GM18951 (cell line): ENCODE measurements at regions of chr3 and their contacts with region 1.

Region 1: DNA sequence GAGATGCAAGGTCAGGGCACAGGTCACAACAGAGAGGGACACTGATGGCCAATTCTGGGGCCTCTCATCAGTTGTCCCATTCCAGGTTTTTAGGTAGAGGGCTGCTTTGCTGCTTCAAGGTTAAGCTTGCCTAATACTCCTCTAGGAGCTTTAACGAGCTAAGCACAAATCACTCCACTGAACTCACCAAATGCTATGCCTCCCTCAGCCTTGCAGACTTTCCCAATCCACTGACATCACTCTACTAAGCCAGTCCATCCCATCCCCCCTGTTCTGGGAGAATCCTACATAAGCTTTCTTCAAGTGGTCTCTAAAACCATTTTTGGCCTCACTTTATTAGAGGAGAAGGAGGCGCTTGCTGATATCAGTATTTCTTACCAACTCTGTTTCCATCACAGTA is 24.8 kb upstream of the PDCD6IP start:
- POLR2A ChIP-seq: no peak

Region 2: GRCh38 chr3:33711100-33711499 is 62.5 kb before region 1 on chr3:
- in situ Hi-C with region 1: no loop called
- POLR2A ChIP-seq: no peak

Region 3: DNA sequence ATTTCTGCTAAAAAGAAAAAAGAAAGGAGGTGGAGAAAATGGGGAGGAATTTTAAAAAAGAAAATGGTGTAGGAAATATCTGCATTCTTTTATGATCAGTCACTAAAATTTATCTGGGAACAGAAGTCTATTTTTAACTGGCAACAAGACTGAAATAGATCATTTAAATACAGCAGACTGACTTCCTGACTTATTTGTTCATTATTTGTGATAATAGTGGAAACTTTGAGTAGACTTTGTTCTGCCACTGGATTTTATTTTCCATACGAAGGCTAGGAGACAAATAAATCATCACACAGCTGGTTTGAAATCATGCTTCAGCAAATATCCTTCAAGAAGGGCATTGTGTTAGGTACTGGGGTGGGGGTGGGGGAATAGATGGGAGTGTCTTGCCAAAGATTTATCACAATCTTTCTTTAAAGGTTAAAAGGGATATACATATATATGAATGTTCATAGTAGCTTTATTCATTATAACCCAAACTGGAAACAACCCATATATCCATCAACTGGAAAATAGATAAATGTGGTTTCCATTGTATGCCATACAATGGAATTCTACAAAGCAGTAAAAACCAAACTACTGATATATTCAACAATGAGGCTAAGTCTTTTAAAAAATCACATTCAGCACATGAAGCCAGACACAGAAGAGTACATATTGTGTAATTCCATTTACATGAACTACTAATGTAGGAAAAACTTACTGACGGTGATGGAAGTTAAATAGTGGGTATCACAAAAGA is 50.8 kb before region 1 on chr3:
- in situ Hi-C with region 1: loop called (anchors 10 kb)
- POLR2A ChIP-seq: no peak